ENCODE measurements at regions of chr2 and their contacts with region 1.

Region 1: GRCh38 chr2:30208452-30208851 is 22.9 kb upstream of the LBH start:
- DNase-seq: peak; percentile 53 to 79 (median 66)
- ATAC-seq: peak; percentile 91 to 95
- H3K4me3 ChIP-seq: no peak overlapping the region
- H3K27ac ChIP-seq: no peak overlapping the region
- H3K4me1 ChIP-seq: peaks cover 2% of the 10 kb centered on the region
- H3K27me3 ChIP-seq: no peaks in the 10 kb centered on the region

Region 2: DNA sequence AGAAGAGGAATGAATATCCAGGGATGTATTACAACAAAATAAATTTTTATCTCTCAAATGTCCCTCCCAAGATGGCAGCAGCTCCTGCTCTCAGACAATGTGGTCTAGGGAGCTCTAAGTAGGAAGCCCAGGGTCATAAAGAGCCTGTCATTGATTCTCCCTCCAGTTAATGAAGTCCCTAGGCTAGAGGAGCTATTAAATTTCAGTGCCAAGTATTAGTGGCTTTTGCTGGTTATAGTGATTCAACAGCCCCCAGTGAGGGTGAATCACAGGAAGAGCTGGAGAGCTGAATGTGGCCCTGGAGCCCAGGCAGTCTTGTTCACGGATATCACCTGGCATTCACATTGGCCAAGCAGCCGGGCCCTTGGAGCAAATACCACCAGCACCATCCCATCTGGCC is 171.4 kb before region 1 on chr2:
- intact Hi-C with region 1: no loop called
- DNase-seq: no peak
- ATAC-seq: no peak
- H3K4me3 ChIP-seq: no peak overlapping the region
- H3K27ac ChIP-seq: no peak overlapping the region
- H3K4me1 ChIP-seq: no peaks in the 10 kb centered on the region
- H3K27me3 ChIP-seq: no peaks in the 10 kb centered on the region

Region 3: GRCh38 chr2:30165050-30165520 is 43.4 kb before region 1 on chr2:
- intact Hi-C with region 1: loop called in 1 of 4 experiments (anchors 5 kb)
- DNase-seq: peak in 1 of 3 donors; percentile 63
- ATAC-seq: peak; percentile 85 to 87
- H3K4me3 ChIP-seq: no peak overlapping the region
- H3K27ac ChIP-seq: no peak overlapping the region
- H3K4me1 ChIP-seq: no peaks in the 10 kb centered on the region
- H3K27me3 ChIP-seq: no peaks in the 10 kb centered on the region

Region 4: DNA sequence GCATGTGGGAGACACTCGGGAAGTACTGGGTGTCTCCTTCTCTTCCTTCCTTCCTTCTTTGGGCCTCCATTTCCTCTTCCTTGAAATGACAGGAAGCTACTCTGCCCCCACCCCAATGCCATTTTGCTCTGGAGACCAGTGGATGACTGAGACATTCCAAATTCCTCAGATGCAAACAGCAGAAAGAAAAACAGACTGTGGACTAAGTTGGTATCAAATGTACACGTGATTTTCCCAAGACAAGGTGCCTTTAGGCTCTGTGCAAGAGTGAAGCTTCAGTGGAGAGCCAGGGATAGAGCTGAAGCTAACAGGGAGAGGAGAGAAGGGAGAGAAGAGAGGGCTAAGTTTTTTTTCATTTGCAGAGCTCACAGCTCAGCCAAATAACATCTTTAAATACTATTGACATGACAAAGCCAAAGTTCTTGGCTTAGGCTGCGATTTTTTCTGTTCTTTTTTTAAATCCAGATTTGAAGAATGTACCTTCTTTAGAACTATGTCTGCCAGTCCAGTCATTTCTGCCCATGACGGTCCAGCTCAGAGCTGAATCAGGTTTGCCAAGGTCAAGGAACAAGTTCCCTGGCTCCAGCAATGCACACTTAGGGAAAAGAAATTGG is 154.1 kb after region 1 on chr2:
- intact Hi-C with region 1: no loop called
- DNase-seq: no peak
- ATAC-seq: no peak
- H3K4me3 ChIP-seq: no peak overlapping the region
- H3K27ac ChIP-seq: peak overlapping the region; percentile 37
- H3K4me1 ChIP-seq: peaks cover 19% of the 10 kb centered on the region
- H3K27me3 ChIP-seq: no peaks in the 10 kb centered on the region

Region 5: DNA sequence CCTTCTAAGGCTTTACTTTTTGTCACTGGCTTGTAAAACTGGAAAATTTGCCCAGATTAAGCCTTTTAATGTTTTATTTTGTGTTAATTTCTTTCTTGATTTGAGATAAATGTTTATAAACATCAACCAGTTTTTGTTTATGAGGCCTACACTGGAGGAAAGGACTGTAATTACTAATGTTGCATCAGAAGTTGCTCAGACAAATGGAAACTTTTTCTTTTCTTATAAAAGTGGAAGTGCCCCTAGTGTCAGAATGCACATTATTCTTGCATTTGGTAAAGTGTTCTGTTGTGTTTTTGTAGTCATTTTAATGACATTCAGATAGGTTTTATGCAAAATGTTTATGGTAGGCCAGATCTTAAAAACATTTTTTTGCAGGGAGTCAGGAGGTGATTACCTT is 263.9 kb after region 1 on chr2:
- intact Hi-C with region 1: loop called in 1 of 4 experiments (anchors 10 kb)
- DNase-seq: no peak
- ATAC-seq: no peak
- H3K4me3 ChIP-seq: no peak overlapping the region
- H3K27ac ChIP-seq: no peak overlapping the region
- H3K4me1 ChIP-seq: no peaks in the 10 kb centered on the region
- H3K27me3 ChIP-seq: no peaks in the 10 kb centered on the region

Region 6: GRCh38 chr2:31233741-31234682 is 1025.6 kb after region 1 on chr2 and contains the start of gene EHD3:
- intact Hi-C with region 1: no loop called
- DNase-seq: peak; percentile 89 to 95 (median 95)
- ATAC-seq: peak; percentile 98 to 99
- H3K4me3 ChIP-seq: peak within 1 kb of the TSS; percentile 52
- H3K27ac ChIP-seq: no peak within 1 kb of the TSS
- H3K4me1 ChIP-seq: peaks cover 7% of the 10 kb centered on the region
- H3K27me3 ChIP-seq: no peaks in the 10 kb centered on the region
- total RNA-seq, gene EHD3: 9.5 to 13.3 (median 10.9) TPM